HEK293T (cell line): ENCODE measurements at regions of chr20 and their contacts with region 1.

Region 1: DNA sequence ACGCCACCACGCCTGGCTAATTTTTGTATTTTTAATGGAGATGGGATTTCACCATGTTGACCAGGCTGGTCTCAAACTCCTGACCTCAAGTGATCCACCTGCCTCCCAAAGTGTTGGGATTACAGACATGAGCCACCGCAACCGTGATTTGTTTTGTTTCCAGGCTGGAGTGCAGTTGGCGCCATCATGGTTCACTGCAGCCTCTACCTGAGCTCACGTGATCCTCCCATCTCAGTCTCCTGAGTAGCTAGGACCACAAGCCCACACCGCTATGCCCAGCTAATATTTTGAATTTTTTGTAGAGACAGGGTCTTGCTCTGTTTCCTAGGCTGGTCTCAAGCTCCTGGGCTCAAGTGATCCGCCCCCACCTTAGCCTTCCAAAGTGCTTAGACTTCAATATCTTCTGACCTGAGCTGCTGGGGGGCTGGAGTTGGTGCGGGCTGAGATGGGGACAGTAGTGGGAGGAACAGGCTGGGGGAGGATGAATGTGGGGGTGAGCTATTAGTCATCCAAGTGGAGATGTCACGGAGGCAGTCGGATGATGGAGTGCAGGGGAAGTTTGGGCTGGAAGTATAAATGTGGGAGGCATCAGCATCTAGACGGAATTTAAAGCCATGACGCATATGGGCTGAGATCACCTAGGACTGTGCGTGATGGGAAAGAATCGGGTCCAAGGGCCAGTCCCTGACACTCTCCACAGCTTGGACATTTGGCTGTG is 23.1 kb upstream of the ZMYND8 start:
- DNase-seq: no peak

Region 2: DNA sequence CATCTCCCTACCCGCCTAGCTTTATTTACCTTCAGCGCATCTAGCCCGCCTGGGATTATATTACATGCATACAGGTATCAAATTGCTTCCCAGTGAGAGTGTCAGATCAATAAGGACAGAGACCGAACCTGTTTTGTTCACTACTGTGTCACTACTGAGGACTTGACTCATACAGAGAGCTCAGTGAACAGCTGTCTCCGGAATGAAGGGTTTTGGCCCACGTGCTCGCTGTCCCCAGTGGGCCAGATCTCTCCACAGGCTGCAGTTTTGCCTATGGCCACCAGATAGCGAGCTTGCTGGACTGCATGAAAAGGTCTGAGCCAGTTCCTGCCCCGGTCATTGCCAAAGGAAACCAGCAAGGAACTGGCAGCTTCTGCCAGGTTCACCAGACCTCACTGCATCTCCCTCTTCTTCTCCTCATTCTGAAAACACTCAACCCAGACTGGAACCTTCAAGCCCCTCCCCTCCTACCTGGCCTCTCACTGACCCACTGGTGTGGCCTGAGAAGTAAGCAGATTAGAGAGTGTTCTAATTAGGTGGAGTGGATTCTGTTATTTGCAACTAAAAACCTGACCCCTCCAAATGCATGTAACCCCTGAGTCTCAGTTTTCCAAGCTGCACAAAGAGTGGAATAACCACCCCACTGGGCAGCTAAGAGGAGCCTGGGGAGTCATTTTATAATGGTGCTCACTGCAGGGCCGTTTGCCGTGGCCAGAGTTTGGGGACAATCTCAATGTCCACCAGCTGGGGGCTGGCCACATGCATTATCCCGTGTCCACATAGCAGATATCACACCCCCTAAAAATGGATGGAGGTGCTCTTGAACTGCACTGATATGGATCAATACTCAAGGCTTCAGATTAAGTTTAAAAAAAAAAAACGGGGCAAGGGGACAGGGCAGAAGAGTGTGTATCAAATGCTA is 173.8 kb before region 1 on chr20:
- CTCF ChIA-PET with region 1: interaction called, 11 read pairs
- POLR2A ChIA-PET with region 1: no interaction called
- DNase-seq: peak; percentile 72

Region 3: DNA sequence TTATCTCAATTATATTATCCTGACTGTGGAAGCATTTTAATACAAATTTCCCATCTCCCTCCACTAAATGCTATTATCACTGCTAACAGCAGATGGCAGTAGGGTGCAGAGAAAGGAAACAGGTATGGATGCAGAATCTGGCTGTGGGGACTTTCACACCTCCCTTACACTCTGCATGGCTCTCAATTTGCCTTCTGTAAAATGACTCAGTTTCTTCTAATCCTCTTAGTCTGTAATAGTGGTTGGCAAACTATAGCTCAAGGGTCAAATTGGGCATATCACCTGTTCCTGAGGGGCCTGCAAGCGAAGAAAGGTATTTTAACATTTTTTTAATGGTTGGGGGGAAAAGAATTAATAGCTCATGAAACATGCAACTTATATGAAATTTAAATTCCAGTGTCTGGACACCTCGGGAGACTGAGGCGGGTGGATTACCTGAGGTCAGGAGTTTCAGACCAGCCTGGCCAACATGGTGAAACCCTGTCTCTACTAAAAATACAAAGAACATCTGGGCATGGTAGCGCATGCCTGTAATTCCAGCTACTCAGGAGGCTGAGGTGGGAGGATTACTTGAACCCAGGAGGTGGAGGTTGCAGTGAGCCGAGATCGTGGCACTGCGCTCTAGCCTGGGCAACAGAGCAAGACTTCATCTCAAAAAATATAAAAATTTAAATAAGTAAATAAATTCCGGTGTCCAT is 106.5 kb before region 1 on chr20:
- CTCF ChIA-PET with region 1: interaction called, 116 read pairs
- POLR2A ChIA-PET with region 1: interaction called, 5 read pairs
- DNase-seq: peak; percentile 66

Region 4: GRCh38 chr20:47293631-47294030 is 86.0 kb before region 1 on chr20:
- CTCF ChIA-PET with region 1: interaction called, 15 read pairs
- POLR2A ChIA-PET with region 1: no interaction called
- DNase-seq: no peak

Region 5: GRCh38 chr20:47423586-47423985 is 44.0 kb after region 1 on chr20:
- CTCF ChIA-PET with region 1: no interaction called
- POLR2A ChIA-PET with region 1: no interaction called
- DNase-seq: no peak

Region 6: DNA sequence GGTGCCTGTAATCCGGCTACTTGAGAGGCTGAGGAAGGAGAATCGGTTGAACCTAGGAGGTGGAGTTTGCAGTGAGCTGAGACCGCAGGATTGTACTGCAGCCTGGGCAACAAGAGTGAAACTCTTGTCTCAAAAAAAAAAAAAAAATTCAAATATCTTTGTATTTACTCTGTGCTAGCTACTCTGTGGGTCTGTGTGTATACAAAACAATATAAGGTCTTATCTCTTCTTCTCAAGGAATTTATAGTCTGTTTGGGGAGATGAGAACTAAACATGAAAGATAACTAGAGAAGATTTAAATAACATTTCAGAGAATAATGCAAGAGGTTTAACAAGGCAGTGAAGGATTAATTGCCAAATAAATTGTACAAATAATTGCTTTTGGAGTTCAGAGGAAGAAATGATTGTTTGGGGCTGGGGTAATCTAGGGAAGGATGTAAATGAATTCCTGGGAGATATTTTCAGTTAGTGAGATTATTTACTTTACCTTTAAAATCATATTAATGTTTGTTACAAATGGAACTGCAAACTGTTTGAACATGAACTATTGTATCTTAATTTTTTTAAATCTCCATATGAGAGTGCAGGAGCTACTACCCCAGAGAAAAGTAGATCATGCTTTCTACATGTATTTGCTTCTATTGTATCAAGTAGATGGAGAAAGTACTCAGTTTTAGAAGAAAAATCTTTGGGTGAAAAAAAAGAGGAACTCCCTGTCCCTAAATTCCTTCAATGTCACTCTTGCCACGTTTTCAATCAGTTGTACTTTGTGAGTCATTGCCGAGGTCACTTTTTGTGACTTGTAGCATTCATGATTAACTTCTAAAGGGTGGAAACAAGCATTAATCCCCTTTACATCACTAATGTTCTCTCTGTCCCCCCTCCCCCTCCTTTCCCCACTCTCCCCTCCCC is 161.1 kb after region 1 on chr20:
- CTCF ChIA-PET with region 1: no interaction called
- POLR2A ChIA-PET with region 1: no interaction called
- DNase-seq: no peak